ENCODE measurements at regions of chr5 and their contacts with region 1.

Region 1: GRCh38 chr5:36241631-36242533 is at the start of gene NADK2:
- DNase-seq: peak; percentile 98
- H3K4me3 ChIP-seq: peak within 1 kb of the TSS; percentile 46 to 59 (median 49)
- H3K27ac ChIP-seq: peak within 1 kb of the TSS; percentile 71
- H3K4me1 ChIP-seq: peaks cover 16% of the 10 kb centered on the region
- H3K27me3 ChIP-seq: no peaks in the 10 kb centered on the region
- CTCF ChIP-seq: peak; percentile 58 to 79
- POLR2A ChIP-seq: peak; percentile 83
- total RNA-seq, gene NADK2: 18.2 and 20.3 TPM in 2 replicates

Region 2: GRCh38 chr5:35308421-35308820 is 933.5 kb before region 1 on chr5:
- CTCF ChIA-PET with region 1: no interaction called
- POLR2A ChIA-PET with region 1: no interaction called
- dilution Hi-C with region 1: no loop called
- intact Hi-C with region 1: no loop called
- DNase-seq: no peak
- H3K4me3 ChIP-seq: no peak overlapping the region
- H3K27ac ChIP-seq: no peak overlapping the region
- H3K4me1 ChIP-seq: no peaks in the 10 kb centered on the region
- H3K27me3 ChIP-seq: no peaks in the 10 kb centered on the region
- CTCF ChIP-seq: no peak
- POLR2A ChIP-seq: no peak

Region 3: GRCh38 chr5:35420200-35420990 is 821.5 kb before region 1 on chr5:
- CTCF ChIA-PET with region 1: no interaction called
- POLR2A ChIA-PET with region 1: no interaction called
- dilution Hi-C with region 1: no loop called
- intact Hi-C with region 1: no loop called
- DNase-seq: no peak
- H3K4me3 ChIP-seq: no peak overlapping the region
- H3K27ac ChIP-seq: no peak overlapping the region
- H3K4me1 ChIP-seq: no peaks in the 10 kb centered on the region
- H3K27me3 ChIP-seq: no peaks in the 10 kb centered on the region
- CTCF ChIP-seq: no peak
- POLR2A ChIP-seq: no peak

Region 4: GRCh38 chr5:35856765-35857291 is 385.1 kb before region 1 on chr5 and contains the start of gene IL7R:
- CTCF ChIA-PET with region 1: no interaction called
- POLR2A ChIA-PET with region 1: no interaction called
- dilution Hi-C with region 1: no loop called
- intact Hi-C with region 1: no loop called
- DNase-seq: peak; percentile 47
- H3K4me3 ChIP-seq: no peak within 1 kb of the TSS
- H3K27ac ChIP-seq: peak within 1 kb of the TSS; percentile 68
- H3K4me1 ChIP-seq: peaks cover 24% of the 10 kb centered on the region
- H3K27me3 ChIP-seq: no peaks in the 10 kb centered on the region
- CTCF ChIP-seq: no peak
- POLR2A ChIP-seq: no peak
- total RNA-seq, gene IL7R: 1.2 TPM in 2 replicates

Region 5: DNA sequence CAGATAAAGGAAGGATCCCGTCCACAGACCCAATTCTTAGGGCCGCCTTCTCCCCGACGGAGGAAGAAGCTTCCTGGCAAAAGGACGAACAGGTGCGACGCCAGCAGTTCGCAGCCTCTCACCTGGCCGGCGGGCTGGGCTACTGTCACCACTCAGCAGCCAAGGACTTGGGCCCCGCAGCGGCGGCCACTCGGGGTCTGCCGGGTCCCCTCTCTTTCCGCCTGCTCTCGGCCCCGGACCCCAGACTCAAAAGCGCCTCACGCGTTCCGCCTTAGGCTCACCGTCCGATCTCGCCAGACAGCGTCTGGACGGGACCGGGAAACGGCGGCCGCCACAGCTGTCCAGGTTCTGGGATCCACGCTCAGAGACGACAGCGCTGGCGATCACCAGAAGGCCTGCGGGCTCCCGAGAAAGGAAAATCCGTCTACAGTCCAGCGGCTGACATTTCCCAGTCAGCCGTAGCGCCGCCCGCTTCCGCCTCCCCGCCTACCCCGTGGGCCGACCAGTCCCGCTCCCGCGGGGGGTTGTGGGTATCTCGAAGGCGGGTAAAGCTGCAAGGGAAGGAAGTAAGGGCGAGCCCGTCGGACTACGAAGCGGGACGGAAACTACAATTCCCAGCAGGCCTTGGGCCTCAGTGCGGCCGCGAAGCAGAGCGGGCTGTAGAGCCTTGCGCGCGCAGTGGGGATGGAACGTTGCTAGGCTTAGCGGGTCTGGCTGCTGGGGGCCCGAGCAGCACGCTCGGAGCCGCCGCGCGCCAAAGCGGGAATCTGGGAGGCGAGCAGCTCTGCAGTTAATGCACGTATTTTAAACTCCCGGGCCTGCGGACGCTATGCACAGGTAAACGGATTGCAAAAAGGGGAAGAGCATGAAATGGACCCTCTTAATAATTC is 90.2 kb before region 1 on chr5 and contains the starts of genes LMBRD2 and SKP2:
- CTCF ChIA-PET with region 1: interaction called, 19 read pairs
- POLR2A ChIA-PET with region 1: interaction called, 4 read pairs
- dilution Hi-C with region 1: no loop called
- intact Hi-C with region 1: loop called (anchors 1 kb)
- DNase-seq: peak; percentile 99
- H3K4me3 ChIP-seq: peak within 1 kb of the TSS; percentile 70 to 84 (median 73)
- H3K27ac ChIP-seq: peak within 1 kb of the TSS; percentile 21
- H3K4me1 ChIP-seq: peaks cover 24% of the 10 kb centered on the region
- H3K27me3 ChIP-seq: no peaks in the 10 kb centered on the region
- CTCF ChIP-seq: no peak
- POLR2A ChIP-seq: peak; percentile 80
- total RNA-seq, gene LMBRD2: 5.2 and 6.6 TPM in 2 replicates
- total RNA-seq, gene SKP2: 40.9 and 42.0 TPM in 2 replicates

Region 6: DNA sequence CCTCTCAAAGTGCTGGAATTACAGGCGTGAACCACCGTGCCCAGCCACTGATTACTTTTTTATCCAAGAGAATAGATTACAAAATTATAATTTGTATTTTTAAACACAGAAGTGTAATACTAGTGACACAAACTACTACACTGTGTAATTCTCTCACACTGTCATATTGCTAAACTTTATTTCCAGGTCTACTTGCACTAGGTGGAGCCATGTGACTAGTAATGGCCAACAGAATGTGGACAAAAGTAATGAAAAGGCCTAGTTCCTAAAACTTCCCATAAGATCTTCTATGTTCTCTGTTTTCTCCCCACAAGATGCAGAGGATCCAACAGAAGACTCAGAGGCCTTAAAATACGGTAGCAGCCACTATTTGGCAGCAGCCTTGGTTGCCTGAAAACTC is 27.4 kb before region 1 on chr5:
- CTCF ChIA-PET with region 1: interaction called, 8 read pairs
- POLR2A ChIA-PET with region 1: no interaction called
- dilution Hi-C with region 1: no loop called
- intact Hi-C with region 1: loop called (anchors 2 kb)
- DNase-seq: no peak
- H3K4me3 ChIP-seq: no peak overlapping the region
- H3K27ac ChIP-seq: no peak overlapping the region
- H3K4me1 ChIP-seq: peaks cover 11% of the 10 kb centered on the region
- H3K27me3 ChIP-seq: no peaks in the 10 kb centered on the region
- CTCF ChIP-seq: no peak
- POLR2A ChIP-seq: no peak

Region 7: GRCh38 chr5:36573441-36573840 is 331.6 kb after region 1 on chr5:
- CTCF ChIA-PET with region 1: no interaction called
- POLR2A ChIA-PET with region 1: interaction called, 6 read pairs
- dilution Hi-C with region 1: no loop called
- intact Hi-C with region 1: loop called (anchors 10 kb)
- DNase-seq: peak; percentile 51
- H3K4me3 ChIP-seq: no peak overlapping the region
- H3K27ac ChIP-seq: peak overlapping the region; percentile 24
- H3K4me1 ChIP-seq: peaks cover 29% of the 10 kb centered on the region
- H3K27me3 ChIP-seq: no peaks in the 10 kb centered on the region
- CTCF ChIP-seq: no peak
- POLR2A ChIP-seq: no peak